ENCODE measurements at regions of chr6 and their contacts with region 1.

Region 1: GRCh38 chr6:131923356-131923755 is 27.8 kb downstream of the CCN2 start:
- DNase-seq: peak; percentile 83
- ATAC-seq: peak; percentile 81
- H3K4me3 ChIP-seq: no peak overlapping the region
- H3K27ac ChIP-seq: no peak overlapping the region
- H3K4me1 ChIP-seq: peaks cover 0 to 7% of the 10 kb centered on the region in 2 experiments; a peak in 2 of 4 replicates
- H3K27me3 ChIP-seq: no peaks in the 10 kb centered on the region
- CTCF ChIP-seq: peak; percentile 56 to 88 (median 78); a peak in 5 of 6 replicates
- POLR2A ChIP-seq: no peak
- RAD21 ChIP-seq: peak; percentile 62

Region 2: DNA sequence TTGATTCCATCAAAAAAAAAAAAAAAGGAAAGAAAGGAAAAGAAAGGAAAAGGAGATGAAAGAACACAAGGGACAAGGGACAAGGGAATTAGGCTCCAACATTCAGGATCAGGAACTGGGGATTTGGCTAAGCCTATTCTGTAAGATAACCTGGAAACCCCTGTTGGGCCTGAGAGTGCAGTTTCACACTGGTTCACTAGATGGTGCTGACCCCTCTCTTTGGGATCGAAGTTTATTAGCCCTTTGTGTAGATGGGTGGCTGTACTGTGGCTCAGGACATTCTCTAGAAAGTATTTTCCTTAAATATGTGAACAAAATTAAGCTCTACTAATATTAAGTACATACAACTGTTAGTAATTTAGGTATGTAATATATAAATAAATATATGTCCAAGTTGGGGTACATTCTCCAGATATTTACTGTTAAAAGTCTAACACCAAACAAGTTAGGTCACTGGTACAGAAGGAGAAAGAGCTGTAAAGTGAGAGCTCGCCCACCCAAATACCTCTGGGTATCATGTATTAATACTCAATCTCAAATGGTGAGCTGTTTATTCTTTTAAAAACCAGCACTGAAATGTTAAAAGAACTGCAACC is 228.4 kb before region 1 on chr6:
- CTCF ChIA-PET with region 1: interaction called, 12 read pairs
- POLR2A ChIA-PET with region 1: no interaction called
- RAD21 ChIA-PET with region 1: no interaction called
- intact Hi-C with region 1: no loop called
- DNase-seq: peak; percentile 47
- ATAC-seq: peak; percentile 97
- H3K4me3 ChIP-seq: no peak overlapping the region
- H3K27ac ChIP-seq: no peak overlapping the region
- H3K4me1 ChIP-seq: no peaks in the 10 kb centered on the region
- H3K27me3 ChIP-seq: no peaks in the 10 kb centered on the region
- CTCF ChIP-seq: peak; percentile 73 to 87 (median 75); a peak in 5 of 6 replicates
- POLR2A ChIP-seq: no peak
- RAD21 ChIP-seq: peak; percentile 87

Region 3: GRCh38 chr6:132136981-132137380 is 213.6 kb after region 1 on chr6:
- CTCF ChIA-PET with region 1: no interaction called
- POLR2A ChIA-PET with region 1: no interaction called
- RAD21 ChIA-PET with region 1: no interaction called
- intact Hi-C with region 1: no loop called
- DNase-seq: no peak
- ATAC-seq: no peak
- H3K4me3 ChIP-seq: no peak overlapping the region
- H3K27ac ChIP-seq: no peak overlapping the region
- H3K4me1 ChIP-seq: no peaks in the 10 kb centered on the region
- H3K27me3 ChIP-seq: no peaks in the 10 kb centered on the region
- CTCF ChIP-seq: no peak
- POLR2A ChIP-seq: no peak
- RAD21 ChIP-seq: no peak

Region 4: GRCh38 chr6:132218059-132218696 is 294.8 kb after region 1 on chr6:
- CTCF ChIA-PET with region 1: interaction called, 28 read pairs
- POLR2A ChIA-PET with region 1: no interaction called
- RAD21 ChIA-PET with region 1: no interaction called
- intact Hi-C with region 1: loop called (anchors 1 kb)
- DNase-seq: peak; percentile 3
- ATAC-seq: no peak
- H3K4me3 ChIP-seq: no peak overlapping the region
- H3K27ac ChIP-seq: no peak overlapping the region
- H3K4me1 ChIP-seq: no peaks in the 10 kb centered on the region
- H3K27me3 ChIP-seq: no peaks in the 10 kb centered on the region
- CTCF ChIP-seq: peak; percentile 36 to 72 (median 47); a peak in 5 of 6 replicates
- POLR2A ChIP-seq: no peak
- RAD21 ChIP-seq: peak; percentile 65

Region 5: DNA sequence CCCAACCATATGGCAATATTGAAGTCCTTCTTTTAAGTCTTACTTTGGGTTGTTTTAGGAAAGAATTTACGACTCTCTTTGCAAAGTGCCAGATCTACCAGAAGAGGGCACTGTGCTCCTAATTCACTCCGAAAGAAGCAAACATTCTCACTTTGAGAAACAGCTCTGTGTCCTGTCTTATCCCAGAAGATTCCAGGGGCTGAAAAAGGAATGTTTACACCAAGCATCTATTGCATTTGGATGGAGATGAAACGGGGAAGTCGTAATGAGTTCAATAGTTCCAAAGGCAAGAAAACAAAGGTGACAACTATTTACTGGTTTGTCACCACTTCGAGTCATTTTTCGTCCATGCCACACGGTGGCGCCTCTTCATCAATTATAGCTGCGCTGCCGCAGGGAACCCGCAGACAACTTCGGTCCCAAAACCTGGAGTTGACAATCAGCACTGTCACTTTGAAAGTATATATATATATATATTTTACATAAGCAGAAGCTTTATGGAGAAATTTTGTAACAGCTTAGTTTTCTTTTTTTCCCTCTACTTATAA is 356.3 kb after region 1 on chr6:
- CTCF ChIA-PET with region 1: interaction called, 52 read pairs
- POLR2A ChIA-PET with region 1: no interaction called
- RAD21 ChIA-PET with region 1: interaction called in 1 of 2 experiments, 4 read pairs
- intact Hi-C with region 1: loop called (anchors 1 kb)
- DNase-seq: peak; percentile 61
- ATAC-seq: peak; percentile 94
- H3K4me3 ChIP-seq: peak overlapping the region; percentile 27 to 52
- H3K27ac ChIP-seq: no peak overlapping the region
- H3K4me1 ChIP-seq: no peaks in the 10 kb centered on the region
- H3K27me3 ChIP-seq: no peaks in the 10 kb centered on the region
- CTCF ChIP-seq: peak; percentile 69 to 98 (median 98)
- POLR2A ChIP-seq: no peak
- RAD21 ChIP-seq: peak; percentile 79

Region 6: GRCh38 chr6:132483779-132484679 is 560.7 kb after region 1 on chr6:
- CTCF ChIA-PET with region 1: interaction called, 9 read pairs
- POLR2A ChIA-PET with region 1: no interaction called
- RAD21 ChIA-PET with region 1: no interaction called
- intact Hi-C with region 1: loop called (anchors 2 kb)
- DNase-seq: peak; percentile 47
- ATAC-seq: peak; percentile 76
- H3K4me3 ChIP-seq: no peak overlapping the region
- H3K27ac ChIP-seq: no peak overlapping the region
- H3K4me1 ChIP-seq: no peaks in the 10 kb centered on the region
- H3K27me3 ChIP-seq: no peaks in the 10 kb centered on the region
- CTCF ChIP-seq: peak; percentile 47 to 86 (median 80)
- POLR2A ChIP-seq: no peak
- RAD21 ChIP-seq: peak; percentile 82

Region 7: DNA sequence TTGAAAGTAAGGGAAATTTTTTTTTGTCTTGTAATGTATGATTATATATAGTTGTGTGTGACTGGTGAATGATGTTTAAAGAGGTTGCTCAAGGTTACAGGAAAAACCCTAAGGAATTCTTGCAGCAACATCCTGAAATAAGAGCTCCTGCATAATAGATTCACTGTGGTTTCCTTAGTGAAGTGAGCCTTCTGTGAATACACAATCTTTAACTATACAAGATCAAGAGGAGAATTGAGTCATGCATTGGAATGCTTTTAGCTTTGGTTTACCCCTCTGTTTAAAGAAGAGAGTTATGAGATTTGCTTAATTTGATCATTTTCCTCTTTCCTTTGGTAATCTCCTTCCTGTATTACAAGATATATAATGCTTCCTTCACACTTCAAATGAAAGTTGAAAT is 1176.2 kb after region 1 on chr6:
- CTCF ChIA-PET with region 1: no interaction called
- POLR2A ChIA-PET with region 1: no interaction called
- RAD21 ChIA-PET with region 1: no interaction called
- intact Hi-C with region 1: no loop called
- DNase-seq: peak; percentile 83
- ATAC-seq: peak; percentile 79
- H3K4me3 ChIP-seq: peak overlapping the region in 1 of 2 experiments; percentile 17; a peak in 1 of 4 replicates
- H3K27ac ChIP-seq: peak overlapping the region; percentile 58
- H3K4me1 ChIP-seq: peaks cover 23 to 49% of the 10 kb centered on the region in 2 experiments; a peak in 3 of 4 replicates
- H3K27me3 ChIP-seq: no peaks in the 10 kb centered on the region; the same call in 1 of the 2 replicates
- CTCF ChIP-seq: no peak
- POLR2A ChIP-seq: no peak
- RAD21 ChIP-seq: no peak; the same call in 1 of the 2 replicates